ENCODE measurements at regions of chr3 and their contacts with region 1.

Region 1: DNA sequence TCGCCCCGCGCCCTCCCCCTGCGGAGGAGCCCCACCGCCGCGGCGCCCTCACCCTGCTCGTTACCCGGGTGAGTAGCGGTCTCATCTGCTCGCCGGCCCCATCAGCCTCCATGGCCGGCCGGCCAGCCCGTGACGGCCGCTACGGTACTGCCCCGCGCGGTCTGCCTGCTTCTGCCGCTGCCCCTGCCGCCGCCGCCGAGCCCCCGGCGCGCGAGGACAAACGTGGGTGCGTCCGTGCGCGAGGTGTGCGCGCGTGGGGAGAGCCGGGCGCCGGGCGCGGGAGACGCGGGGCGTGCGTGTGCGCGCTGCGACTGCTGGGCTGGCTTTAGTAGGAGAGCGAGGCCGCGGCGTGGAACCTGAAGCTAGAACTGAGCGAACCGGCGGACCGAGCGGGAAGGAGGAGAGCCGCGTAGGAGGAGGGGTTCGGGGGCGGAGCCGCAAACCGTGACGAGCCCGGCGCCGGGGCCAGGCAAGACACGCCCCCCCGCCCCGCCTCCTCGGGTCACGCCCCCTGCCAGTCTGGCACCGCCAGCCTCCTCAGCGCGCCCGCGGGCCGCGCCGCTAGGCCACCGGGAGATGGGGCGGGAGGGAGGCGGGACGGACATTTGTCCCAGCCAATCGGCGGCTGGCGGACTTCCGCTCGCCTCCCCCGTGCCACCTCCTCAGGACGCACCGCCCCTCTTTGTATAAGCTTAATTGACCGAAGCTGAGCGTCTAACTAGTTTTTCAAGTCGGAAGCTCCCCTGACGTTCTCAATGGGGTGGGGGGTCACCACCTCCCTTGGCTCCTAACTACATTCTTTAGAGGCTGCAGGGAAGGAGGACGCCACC is at the start of gene SLC4A7:
- DNase-seq: peak; percentile 99
- ATAC-seq: peak; percentile 89
- H3K4me3 Mint-ChIP-seq: peak within 1 kb of the TSS; percentile 99
- H3K27ac Mint-ChIP-seq: peak within 1 kb of the TSS; percentile 97
- H3K4me1 Mint-ChIP-seq: peaks cover 42% of the 10 kb centered on the region
- H3K27me3 Mint-ChIP-seq: no peaks in the 10 kb centered on the region
- CTCF ChIP-seq: no peak
- total RNA-seq, gene SLC4A7: 24.3 and 31.3 TPM in 2 replicates

Region 2: DNA sequence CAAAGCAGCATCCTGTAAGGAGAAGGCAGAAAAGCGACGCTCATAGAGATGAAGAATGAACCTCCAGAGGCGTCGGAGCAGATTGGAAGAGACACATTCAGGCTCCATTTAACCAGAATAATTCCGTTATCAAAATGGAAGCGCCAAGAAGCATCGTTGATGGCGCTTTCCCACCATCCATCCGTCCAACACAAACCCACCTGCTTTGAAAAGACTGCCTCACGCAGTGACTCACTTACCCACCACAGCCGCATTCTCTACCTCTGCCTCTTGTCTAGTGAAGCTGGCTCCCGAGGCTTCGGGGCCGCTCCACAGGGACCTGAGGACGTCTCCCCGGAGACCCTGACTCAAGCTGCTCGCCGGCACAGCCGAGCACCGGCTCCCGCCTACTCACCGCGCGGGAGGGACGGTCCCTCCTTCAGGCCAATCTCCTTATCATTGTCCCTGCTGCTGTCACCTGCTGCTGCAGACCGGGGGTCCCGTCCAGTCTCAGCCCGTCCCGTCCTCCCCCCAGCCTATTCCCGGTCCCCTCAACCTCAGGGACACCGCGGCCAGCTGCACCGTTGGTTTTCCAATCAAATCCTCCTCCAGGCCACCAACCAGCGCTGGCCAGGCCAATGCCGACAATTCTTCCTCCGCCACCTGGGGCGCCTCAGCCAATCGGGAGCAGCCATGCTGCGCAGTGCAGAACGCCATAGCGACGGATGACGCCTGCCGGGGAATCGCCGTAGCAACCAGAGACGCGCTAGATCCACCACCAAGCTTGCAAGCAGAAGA is 115.2 kb before region 1 on chr3 and contains the start of gene NEK10:
- CTCF ChIA-PET with region 1: no interaction called
- POLR2A ChIA-PET with region 1: interaction called, 4 read pairs
- intact Hi-C with region 1: loop called (anchors 1 kb)
- DNase-seq: peak; percentile 83
- ATAC-seq: peak; percentile 97
- H3K4me3 Mint-ChIP-seq: peak within 1 kb of the TSS; percentile 94
- H3K27ac Mint-ChIP-seq: peak within 1 kb of the TSS; percentile 65
- H3K4me1 Mint-ChIP-seq: peaks cover 15% of the 10 kb centered on the region
- H3K27me3 Mint-ChIP-seq: no peaks in the 10 kb centered on the region
- CTCF ChIP-seq: no peak
- total RNA-seq, gene NEK10: 0.59 and 0.84 TPM in 2 replicates

Region 3: GRCh38 chr3:27590437-27591298 is 106.4 kb after region 1 on chr3:
- CTCF ChIA-PET with region 1: no interaction called
- POLR2A ChIA-PET with region 1: no interaction called
- intact Hi-C with region 1: loop called (anchors 5 kb)
- DNase-seq: no peak
- ATAC-seq: no peak
- H3K4me3 Mint-ChIP-seq: peak overlapping the region; percentile 5
- H3K27ac Mint-ChIP-seq: no peak overlapping the region
- H3K4me1 Mint-ChIP-seq: peaks cover 25% of the 10 kb centered on the region
- H3K27me3 Mint-ChIP-seq: no peaks in the 10 kb centered on the region
- CTCF ChIP-seq: no peak

Region 4: DNA sequence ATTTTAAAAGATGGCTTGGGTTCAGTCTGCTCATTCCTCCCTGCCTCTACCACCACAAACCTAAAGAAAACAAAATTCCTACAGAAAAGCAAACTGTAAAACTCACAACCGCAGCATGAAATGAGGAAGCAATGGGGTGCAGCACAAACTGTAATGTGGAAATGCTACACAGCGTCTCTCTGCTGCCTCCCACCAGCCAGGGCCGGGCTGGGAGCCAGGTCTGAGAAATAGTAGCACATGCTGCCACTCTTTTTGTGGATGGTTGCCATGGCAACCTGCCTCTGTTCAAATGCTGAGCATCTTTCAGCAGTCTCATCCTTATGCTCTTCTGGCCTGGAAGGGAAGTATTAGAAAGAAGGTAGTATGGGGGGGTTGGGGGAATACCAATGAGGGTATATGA is 182.5 kb after region 1 on chr3:
- CTCF ChIA-PET with region 1: no interaction called
- POLR2A ChIA-PET with region 1: no interaction called
- intact Hi-C with region 1: loop called (anchors 5 kb)
- DNase-seq: no peak
- ATAC-seq: peak; percentile 50
- H3K4me3 Mint-ChIP-seq: peak overlapping the region; percentile 39
- H3K27ac Mint-ChIP-seq: peak overlapping the region; percentile 47
- H3K4me1 Mint-ChIP-seq: peaks cover 17% of the 10 kb centered on the region
- H3K27me3 Mint-ChIP-seq: no peaks in the 10 kb centered on the region
- CTCF ChIP-seq: no peak

Region 5: DNA sequence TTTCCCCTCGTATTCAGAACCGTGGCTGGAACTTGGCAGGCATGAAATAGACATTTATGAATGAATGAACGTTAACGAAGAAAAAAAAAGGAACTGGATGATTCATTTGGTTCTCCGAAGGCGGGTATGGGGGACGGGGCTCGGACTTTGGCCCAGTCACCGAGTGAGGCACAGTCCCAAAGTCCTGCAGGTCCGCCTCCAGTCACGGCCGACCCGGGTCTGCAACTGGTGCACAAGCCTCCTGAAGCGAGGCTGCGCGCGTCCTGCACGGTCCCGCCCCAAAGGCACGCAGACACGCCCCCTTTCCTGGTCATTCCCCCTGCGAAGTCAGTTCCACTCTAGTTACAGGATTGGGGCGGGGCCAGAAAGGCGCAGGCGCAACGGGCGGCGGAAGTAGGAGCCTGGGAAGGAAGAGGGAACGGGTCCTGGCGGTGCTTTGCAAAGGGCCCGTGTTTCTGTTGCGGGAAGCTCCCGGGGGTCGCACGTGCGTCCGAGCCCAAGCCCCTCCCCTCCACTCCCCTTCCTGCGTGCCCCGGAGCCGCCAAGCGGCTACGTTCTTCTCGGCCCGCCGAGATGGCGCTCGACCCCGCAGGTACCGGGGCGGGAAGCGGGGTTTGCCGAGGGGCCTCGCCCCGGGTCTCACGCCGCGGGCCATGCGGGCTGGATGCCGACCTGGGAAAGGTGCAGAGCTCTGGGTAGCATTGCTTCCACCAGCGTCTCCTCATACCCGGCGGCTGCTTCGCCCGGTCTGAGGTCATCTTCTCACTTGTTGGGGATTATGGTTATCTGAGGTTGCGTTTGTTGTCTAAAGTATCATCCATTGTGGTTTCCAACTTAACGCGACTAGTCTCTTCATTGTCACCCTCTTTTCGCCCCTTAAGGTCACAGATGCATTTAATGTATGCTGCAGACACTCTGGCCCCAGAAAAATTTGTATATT is 757.3 kb after region 1 on chr3 and contains the start of gene CMC1:
- CTCF ChIA-PET with region 1: no interaction called
- POLR2A ChIA-PET with region 1: no interaction called
- intact Hi-C with region 1: loop called (anchors 1 kb)
- DNase-seq: peak; percentile 88
- ATAC-seq: peak; percentile 94
- H3K4me3 Mint-ChIP-seq: peak within 1 kb of the TSS; percentile 98
- H3K27ac Mint-ChIP-seq: peak within 1 kb of the TSS; percentile 89
- H3K4me1 Mint-ChIP-seq: peaks cover 27% of the 10 kb centered on the region
- H3K27me3 Mint-ChIP-seq: no peaks in the 10 kb centered on the region
- CTCF ChIP-seq: no peak
- total RNA-seq, gene CMC1: 10.9 and 14.2 TPM in 2 replicates

Measured in activated B cell treated with CpG ODN at 0.5 μM for 24 hours (primary cell).